ENCODE measurements at regions of chr12 and their contacts with region 1.

Region 1: GRCh38 chr12:6195665-6196535 is 4.3 kb upstream of the CD9 start:
- DNase-seq: peak; percentile 81
- ATAC-seq: peak; percentile 79
- H3K4me3 Mint-ChIP-seq: no peak overlapping the region
- H3K27ac Mint-ChIP-seq: no peak overlapping the region
- H3K4me1 Mint-ChIP-seq: peaks cover 13% of the 10 kb centered on the region
- H3K27me3 Mint-ChIP-seq: peaks cover 51% of the 10 kb centered on the region

Region 2: DNA sequence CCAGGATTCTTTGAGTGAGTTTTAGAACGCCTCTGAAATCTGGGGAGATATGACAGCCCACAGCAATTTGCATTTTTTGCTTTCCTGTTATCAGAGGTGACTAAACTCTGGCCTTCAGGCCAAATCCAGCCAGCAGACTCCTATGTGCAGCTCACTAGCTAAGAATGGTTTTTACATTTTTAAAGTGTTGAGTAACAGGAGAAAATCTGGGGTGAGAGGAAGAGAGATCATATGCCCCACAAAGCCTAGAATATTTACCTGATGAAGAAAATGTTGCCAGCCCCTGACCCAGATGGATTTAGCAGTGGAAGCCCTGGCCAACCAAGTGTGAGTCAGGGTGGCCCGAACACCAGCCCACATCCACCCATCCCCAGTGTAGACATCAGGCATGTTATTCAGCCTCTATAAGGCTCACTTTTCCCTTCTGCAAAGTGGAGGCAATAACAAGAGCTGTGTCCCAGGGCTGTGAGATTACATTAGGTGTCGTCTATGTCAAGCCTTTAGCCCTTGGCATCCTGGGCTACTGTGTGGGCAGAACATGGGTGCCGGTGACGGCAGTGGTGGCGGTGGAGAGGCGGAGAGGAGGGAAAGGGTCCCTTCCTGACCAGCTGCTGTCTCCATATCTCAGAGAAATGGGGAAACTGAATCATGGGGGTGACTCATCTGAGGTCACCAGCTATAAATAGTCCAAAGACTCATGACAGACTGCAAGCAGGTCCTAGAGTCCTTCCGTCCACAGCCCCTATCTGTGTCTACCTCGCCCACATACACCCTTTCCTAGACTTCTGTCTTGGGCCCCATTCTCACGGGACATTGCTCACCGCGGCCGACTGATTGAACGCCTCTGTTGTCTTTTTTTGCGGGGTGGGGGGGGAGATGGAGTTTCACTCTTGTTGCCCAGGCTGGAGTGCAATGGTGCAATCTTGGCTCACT is 28.3 kb before region 1 on chr12:
- CTCF ChIA-PET with region 1: interaction called, 14 read pairs
- DNase-seq: peak; percentile 79
- ATAC-seq: peak; percentile 91
- H3K4me3 Mint-ChIP-seq: no peak overlapping the region
- H3K27ac Mint-ChIP-seq: peak overlapping the region; percentile 78
- H3K4me1 Mint-ChIP-seq: peaks cover 23% of the 10 kb centered on the region
- H3K27me3 Mint-ChIP-seq: peaks cover 12% of the 10 kb centered on the region

Region 3: GRCh38 chr12:6215120-6215807 is 19.4 kb after region 1 on chr12:
- CTCF ChIA-PET with region 1: interaction called, 17 read pairs
- DNase-seq: no peak
- ATAC-seq: no peak
- H3K4me3 Mint-ChIP-seq: no peak overlapping the region
- H3K27ac Mint-ChIP-seq: no peak overlapping the region
- H3K4me1 Mint-ChIP-seq: peaks cover 15% of the 10 kb centered on the region
- H3K27me3 Mint-ChIP-seq: peaks cover 8% of the 10 kb centered on the region

Region 4: DNA sequence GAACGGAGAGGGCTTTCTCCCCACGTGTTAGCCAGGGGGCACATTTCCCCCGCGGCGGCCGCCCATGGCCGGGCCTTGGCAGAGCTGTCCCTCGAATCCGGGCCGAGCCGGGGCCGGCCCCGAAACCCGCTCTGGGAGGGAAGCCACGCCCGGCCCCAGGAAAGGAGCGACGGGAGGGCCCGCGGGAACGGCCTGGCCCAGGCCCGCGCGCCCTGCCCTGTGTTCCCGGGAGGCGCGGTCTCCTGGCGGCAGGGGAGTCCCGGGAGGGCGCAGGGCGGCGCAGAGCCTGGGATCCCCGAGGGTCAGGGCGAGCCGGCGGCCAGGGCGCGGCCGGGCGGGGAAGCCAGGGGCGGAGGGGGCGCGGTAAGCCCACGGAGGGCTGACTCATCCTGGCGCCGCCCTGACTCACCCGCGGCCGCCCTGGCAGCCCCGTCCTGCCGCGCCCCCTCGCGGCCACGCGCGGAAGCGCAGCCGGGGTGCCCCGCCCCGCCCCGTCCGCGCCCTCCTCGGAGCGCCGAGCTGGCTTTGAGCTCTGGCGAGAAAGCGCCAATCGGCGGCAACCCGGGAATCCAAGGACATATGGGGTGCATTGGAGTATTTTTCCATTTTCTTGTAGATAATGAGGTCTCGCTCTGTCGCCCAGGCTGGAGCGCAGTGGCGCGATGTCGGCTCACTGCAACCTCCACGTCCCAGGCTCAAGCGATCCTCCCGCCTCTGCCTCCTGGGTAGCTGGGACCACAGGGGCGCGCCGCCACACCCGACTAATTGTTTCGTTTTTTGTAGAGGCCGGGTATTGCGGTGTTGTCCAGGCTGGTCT is 82.7 kb after region 1 on chr12:
- CTCF ChIA-PET with region 1: interaction called, 225 read pairs
- DNase-seq: peak; percentile 85
- ATAC-seq: peak; percentile 98
- H3K4me3 Mint-ChIP-seq: peak overlapping the region; percentile 61
- H3K27ac Mint-ChIP-seq: peak overlapping the region; percentile 21
- H3K4me1 Mint-ChIP-seq: peaks cover 3% of the 10 kb centered on the region
- H3K27me3 Mint-ChIP-seq: peaks cover 52% of the 10 kb centered on the region

Region 5: DNA sequence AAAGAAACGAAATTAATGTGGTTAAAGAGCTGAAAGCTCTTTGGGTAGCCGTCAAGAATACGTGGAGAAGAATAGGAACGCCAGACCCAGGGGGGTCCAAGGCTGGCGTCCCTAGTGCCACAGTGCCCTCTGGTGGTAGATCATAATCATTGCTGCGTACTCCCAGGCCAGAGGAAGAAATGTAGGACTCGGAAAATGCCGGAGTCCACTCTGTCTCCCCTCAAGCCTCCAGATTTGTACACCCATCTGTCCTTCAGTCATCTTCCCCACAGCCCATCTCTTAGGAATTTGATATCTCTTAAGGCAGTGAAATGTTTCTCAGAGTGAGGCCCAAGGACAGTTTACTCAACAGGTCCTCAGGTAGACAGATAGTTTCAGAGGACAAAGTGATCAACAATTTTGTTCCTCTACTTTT is 89.2 kb after region 1 on chr12:
- CTCF ChIA-PET with region 1: interaction called, 225 read pairs
- DNase-seq: peak; percentile 71
- ATAC-seq: peak; percentile 92
- H3K4me3 Mint-ChIP-seq: no peak overlapping the region
- H3K27ac Mint-ChIP-seq: no peak overlapping the region
- H3K4me1 Mint-ChIP-seq: peaks cover 2% of the 10 kb centered on the region
- H3K27me3 Mint-ChIP-seq: peaks cover 23% of the 10 kb centered on the region